WTC11 (cell line): ENCODE measurements at regions of chr1 and their contacts with region 1.

Region 1: DNA sequence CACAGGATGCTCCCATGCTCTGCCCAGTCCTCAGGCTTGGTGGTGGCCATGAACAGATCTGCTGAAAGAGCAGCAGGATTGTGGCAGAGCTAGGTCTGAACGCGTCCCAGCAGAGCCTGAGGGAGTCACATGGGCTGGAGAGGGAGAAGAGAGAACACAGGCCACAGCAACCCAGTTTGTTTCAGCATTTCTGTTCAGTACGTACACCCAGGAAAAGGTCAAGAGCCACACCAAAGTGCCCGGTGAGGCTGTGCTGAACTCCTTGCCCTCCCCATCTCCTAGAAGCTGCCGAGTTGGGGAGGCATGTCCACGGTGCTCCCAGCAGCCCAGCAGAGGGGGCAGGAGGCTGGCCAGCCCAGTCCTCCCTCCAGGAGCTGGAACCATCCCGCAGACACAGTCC is 5.5 kb downstream of the PKP1 start:
- DNase-seq: no peak
- ATAC-seq: no peak
- H3K4me3 Mint-ChIP-seq: no peak overlapping the region
- H3K27ac Mint-ChIP-seq: 0 out of 2 replicates have a peak overlapping the region, but pooled peaks have one; percentile 15
- H3K4me1 Mint-ChIP-seq: peaks cover 24% of the 10 kb centered on the region
- H3K27me3 Mint-ChIP-seq: peaks cover 15% of the 10 kb centered on the region
- CTCF ChIP-seq: no peak

Region 2: GRCh38 chr1:201299968-201300367 is 11.2 kb after region 1 on chr1:
- CTCF ChIA-PET with region 1: interaction called, 12 read pairs
- POLR2A ChIA-PET with region 1: no interaction called
- DNase-seq: no peak
- ATAC-seq: no peak
- H3K4me3 Mint-ChIP-seq: no peak overlapping the region
- H3K27ac Mint-ChIP-seq: no peak overlapping the region
- H3K4me1 Mint-ChIP-seq: no peaks in the 10 kb centered on the region
- H3K27me3 Mint-ChIP-seq: no peaks in the 10 kb centered on the region
- CTCF ChIP-seq: no peak

Region 3: GRCh38 chr1:201309426-201309825 is 20.7 kb after region 1 on chr1:
- CTCF ChIA-PET with region 1: interaction called, 10 read pairs
- POLR2A ChIA-PET with region 1: no interaction called
- DNase-seq: peak; percentile 78
- ATAC-seq: peak; percentile 92
- H3K4me3 Mint-ChIP-seq: no peak overlapping the region
- H3K27ac Mint-ChIP-seq: no peak overlapping the region
- H3K4me1 Mint-ChIP-seq: peaks cover 12% of the 10 kb centered on the region
- H3K27me3 Mint-ChIP-seq: peaks cover 32% of the 10 kb centered on the region
- CTCF ChIP-seq: no peak